ENCODE measurements at regions of chr12 and their contacts with region 1.

Region 1: GRCh38 chr12:56468216-56469006 is at the start of gene SPRYD4:
- DNase-seq: peak; percentile 94
- H3K4me3 Mint-ChIP-seq: peak within 1 kb of the TSS; percentile 99
- H3K27ac Mint-ChIP-seq: peak within 1 kb of the TSS; percentile 98
- H3K4me1 Mint-ChIP-seq: peaks cover 19% of the 10 kb centered on the region
- H3K27me3 Mint-ChIP-seq: no peaks in the 10 kb centered on the region
- total RNA-seq, gene SPRYD4: 5.0 and 5.5 TPM in 2 replicates

Region 2: GRCh38 chr12:56189176-56189917 is 279.1 kb before region 1 on chr12 and contains the start of gene SMARCC2:
- intact Hi-C with region 1: loop called (anchors 1 kb)
- DNase-seq: peak; percentile 85
- H3K4me3 Mint-ChIP-seq: peak within 1 kb of the TSS; percentile 95
- H3K27ac Mint-ChIP-seq: peak within 1 kb of the TSS; percentile 96
- H3K4me1 Mint-ChIP-seq: peaks cover 55% of the 10 kb centered on the region
- H3K27me3 Mint-ChIP-seq: peaks cover 2% of the 10 kb centered on the region
- total RNA-seq, gene SMARCC2: 124 and 132 TPM in 2 replicates

Region 3: DNA sequence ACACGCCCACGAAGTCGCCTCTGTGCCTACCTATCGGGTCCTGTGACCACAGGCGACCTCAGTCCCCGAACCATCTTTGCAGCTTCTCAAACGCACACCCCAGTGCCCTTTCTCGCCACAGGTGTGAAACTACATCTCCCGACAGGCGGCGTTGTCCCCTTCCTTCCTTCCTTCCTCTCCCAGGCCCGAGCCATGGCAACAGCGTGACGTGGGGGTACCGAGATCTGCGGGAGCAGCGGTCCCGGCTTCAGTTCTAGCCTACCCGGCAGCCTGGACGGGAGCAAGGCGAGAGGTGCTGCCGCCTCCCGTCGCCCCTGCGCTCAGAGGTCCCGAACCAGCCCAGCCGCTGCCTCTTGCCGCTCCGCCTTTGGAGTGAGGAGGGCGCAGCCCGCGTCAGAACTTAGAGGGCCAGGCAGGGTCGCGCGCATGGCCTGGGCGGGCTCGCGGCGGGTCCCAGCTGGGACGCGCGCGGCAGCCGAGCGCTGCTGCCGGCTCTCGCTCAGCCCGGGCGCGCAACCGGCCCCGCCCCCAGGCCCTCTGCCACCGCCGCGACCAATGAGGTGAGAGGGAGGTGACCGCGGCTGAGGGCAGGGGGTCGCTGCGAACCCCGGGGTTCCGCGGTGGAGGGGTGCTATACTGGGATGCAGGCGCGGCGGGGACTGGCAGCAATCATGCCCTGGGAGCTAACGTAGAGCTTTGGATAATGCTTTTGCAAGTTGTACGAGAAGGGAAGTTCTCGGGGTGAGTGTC is 201.5 kb before region 1 on chr12 and contains the start of gene COQ10A:
- intact Hi-C with region 1: loop called (anchors 1 kb)
- DNase-seq: peak; percentile 84
- H3K4me3 Mint-ChIP-seq: peak within 1 kb of the TSS; percentile 96
- H3K27ac Mint-ChIP-seq: peak within 1 kb of the TSS; percentile 87
- H3K4me1 Mint-ChIP-seq: peaks cover 15% of the 10 kb centered on the region
- H3K27me3 Mint-ChIP-seq: no peaks in the 10 kb centered on the region
- total RNA-seq, gene COQ10A: 17.8 and 18.0 TPM in 2 replicates

Region 4: GRCh38 chr12:56315622-56316473 is 152.6 kb before region 1 on chr12 and contains the start of gene CNPY2:
- intact Hi-C with region 1: loop called (anchors 1 kb)
- DNase-seq: peak; percentile 83
- H3K4me3 Mint-ChIP-seq: peak within 1 kb of the TSS; percentile 98
- H3K27ac Mint-ChIP-seq: peak within 1 kb of the TSS; percentile 96
- H3K4me1 Mint-ChIP-seq: peaks cover 12% of the 10 kb centered on the region
- H3K27me3 Mint-ChIP-seq: no peaks in the 10 kb centered on the region
- total RNA-seq, gene CNPY2: 170 and 172 TPM in 2 replicates

Region 5: GRCh38 chr12:56377310-56377988 is 91.0 kb before region 1 on chr12:
- intact Hi-C with region 1: loop called (anchors 1 kb)
- DNase-seq: no peak
- H3K4me3 Mint-ChIP-seq: no peak overlapping the region
- H3K27ac Mint-ChIP-seq: no peak overlapping the region
- H3K4me1 Mint-ChIP-seq: no peaks in the 10 kb centered on the region
- H3K27me3 Mint-ChIP-seq: peaks cover 8% of the 10 kb centered on the region

Region 6: GRCh38 chr12:56457817-56458216 is 10.6 kb before region 1 on chr12:
- intact Hi-C with region 1: no loop called
- DNase-seq: no peak
- H3K4me3 Mint-ChIP-seq: no peak overlapping the region
- H3K27ac Mint-ChIP-seq: no peak overlapping the region
- H3K4me1 Mint-ChIP-seq: no peaks in the 10 kb centered on the region
- H3K27me3 Mint-ChIP-seq: no peaks in the 10 kb centered on the region

Region 7: DNA sequence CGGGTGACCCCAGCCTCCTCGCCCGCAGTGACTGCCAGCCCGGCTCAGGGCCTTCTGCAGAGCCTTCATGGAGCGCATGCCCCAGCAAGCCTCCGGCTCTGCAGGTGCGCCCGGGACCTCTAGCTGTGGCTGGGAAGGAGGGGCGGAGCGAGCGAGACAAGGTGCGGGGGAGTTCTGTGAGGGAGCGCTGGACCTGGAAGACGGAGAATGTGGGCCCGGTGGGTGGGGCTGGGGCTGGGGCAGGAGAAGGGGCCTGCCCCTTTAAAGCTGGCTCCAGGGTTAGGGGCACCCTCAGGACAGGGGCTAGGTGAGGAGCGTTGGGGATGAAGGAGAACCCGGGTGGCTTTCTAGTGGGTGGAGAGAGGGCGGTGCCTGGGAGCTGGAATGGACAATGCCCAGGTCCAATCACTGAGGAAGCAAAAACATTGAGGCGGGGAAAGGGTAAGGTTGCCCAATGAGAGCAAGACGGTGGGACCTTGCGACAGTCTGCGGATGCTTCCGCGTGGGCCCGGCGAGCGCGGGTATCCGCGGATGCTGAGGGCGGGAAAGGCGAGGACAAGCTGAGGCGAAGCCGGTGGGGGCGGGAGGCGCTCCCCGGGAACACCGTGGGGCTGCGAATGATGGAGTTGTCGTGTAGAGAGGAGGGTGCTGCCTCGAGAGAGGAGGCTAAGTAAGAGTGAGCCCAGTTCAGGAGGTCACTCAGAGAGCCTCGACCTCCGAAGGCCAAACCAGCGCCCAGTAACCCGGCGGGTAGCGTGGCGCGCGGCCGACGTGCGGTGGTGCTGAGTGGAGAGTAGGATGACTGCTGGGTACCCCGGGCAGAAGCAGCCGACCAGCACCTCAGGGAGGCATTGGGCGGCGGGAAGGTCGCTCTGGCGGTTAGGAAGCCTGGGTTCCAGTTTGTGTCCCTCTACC is 19.9 kb after region 1 on chr12 and contains the start of gene GLS2:
- intact Hi-C with region 1: loop called (anchors 2 kb)
- DNase-seq: peak; percentile 60
- H3K4me3 Mint-ChIP-seq: peak within 1 kb of the TSS; percentile 85
- H3K27ac Mint-ChIP-seq: no peak within 1 kb of the TSS
- H3K4me1 Mint-ChIP-seq: peaks cover 22% of the 10 kb centered on the region
- H3K27me3 Mint-ChIP-seq: peaks cover 48% of the 10 kb centered on the region
- total RNA-seq, gene GLS2: 1.5 and 2.6 TPM in 2 replicates

Region 8: DNA sequence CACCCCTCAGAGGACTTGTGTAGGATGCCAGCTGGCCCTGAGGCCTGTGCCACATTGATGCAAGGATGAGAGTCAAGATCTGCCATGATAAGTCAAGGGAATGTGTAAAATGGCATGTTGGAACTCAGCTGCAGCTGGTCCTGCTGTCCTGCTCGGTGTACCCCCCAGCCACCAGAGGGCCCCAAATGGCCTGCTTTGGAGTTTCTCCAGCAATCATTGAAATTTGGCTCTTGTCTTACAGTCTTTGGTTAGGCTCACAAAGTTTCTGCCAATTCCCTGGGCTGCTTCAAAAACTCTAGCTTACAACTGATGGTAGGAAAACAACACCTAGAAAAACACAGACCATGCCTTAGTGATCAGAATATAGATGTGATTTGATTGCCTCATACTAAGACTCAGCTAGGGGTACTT is 371.5 kb after region 1 on chr12:
- intact Hi-C with region 1: no loop called
- DNase-seq: peak; percentile 2
- H3K4me3 Mint-ChIP-seq: no peak overlapping the region
- H3K27ac Mint-ChIP-seq: no peak overlapping the region
- H3K4me1 Mint-ChIP-seq: peaks cover 14% of the 10 kb centered on the region
- H3K27me3 Mint-ChIP-seq: peaks cover 2% of the 10 kb centered on the region

Measured in activated T-helper 1 cell treated with anti-CD3 and anti-CD28 coated beads, Interleukin-12 subunit alpha, Interleukin-12 subunit beta, Interleukin-2, Interleukin-4 antibody, amounts not matched to agents 30 ng/mL and 10 ng/mL and 1 ng/mL, durations not matched to agents 14 hours and 24 hours and 36 hours (primary cell).